Cardiac septum (tissue), 1 donor: ENCODE measurements at regions of chr10 and their contacts with region 1.

Region 1: DNA sequence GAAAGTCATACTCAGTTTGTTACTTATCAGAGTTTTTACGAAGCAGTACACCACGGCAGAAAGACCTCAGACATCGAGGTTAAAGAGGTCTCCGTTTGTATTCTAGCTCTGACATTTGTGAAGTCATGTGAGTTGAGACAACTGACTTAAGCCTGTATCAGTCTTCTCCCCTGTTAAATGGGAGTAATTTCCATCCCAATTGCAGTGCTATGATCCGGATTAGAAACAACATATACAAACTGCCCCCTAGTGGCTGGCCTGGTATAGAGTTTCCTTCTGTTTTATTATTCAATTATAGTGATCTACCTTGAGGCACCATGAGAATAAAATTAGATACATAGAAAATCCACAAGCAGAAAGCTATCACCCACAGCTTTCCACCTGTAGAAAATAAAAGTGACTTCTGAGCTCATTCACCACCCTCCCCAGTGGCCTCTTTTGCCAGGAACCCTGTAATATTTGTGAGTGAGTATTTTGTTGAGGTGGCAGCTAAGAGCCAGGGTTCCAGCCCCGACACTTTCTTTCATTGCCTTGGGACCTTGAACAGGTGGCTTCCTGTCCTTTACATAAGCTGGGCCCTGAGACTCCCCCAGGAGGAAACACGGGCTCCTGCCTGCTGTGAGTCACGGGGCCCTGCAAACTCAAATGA is 607.2 kb upstream of the MGMT start:
- DNase-seq: no peak

Region 2: GRCh38 chr10:128540781-128541761 is 318.8 kb before region 1 on chr10:
- intact Hi-C with region 1: loop called (anchors 10 kb)
- DNase-seq: no peak

Region 3: DNA sequence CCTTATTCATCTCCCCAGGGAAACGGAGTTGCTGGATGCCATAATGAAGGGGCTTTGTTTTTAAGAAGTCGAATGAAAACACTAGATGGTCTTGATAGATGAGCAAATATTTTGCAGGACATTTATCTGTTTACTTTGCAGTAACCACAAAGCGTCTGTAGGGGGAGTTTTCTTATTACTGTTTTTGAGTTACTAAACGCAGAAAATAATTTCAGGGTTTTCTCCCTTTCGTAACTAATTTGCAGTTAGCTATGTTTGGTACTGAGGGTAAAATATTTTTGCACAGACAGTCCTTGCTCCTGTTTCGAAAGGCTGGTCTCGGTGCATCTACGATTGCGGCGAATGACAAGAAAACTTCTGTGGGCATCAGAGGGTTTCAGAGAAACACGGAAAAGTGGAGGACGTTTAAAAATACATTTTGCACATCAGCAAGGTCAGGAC is 228.0 kb before region 1 on chr10:
- intact Hi-C with region 1: loop called (anchors 5 kb)
- DNase-seq: no peak

Region 4: DNA sequence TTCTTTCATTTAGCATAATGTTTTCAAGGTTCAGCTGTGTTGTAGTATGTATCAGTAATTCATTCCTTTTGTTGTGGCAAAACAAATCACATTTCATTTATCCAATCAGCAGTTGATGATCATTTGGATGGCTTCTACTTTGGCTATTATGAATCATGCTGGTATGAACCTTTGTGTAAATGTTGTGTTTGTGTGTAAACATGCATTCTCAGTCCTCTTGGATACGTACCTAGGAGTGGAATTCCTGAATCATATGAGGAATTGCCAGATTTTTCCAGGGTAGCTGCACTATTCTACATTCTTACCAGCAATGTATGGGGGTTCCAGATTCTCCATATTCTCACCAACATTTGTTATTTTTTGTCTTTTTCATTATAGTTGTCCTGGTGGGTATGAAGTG is 155.1 kb before region 1 on chr10:
- intact Hi-C with region 1: no loop called
- DNase-seq: no peak